Mammary epithelial cell (primary cell): ENCODE measurements at regions of chr3 and their contacts with region 1.

Region 1: GRCh38 chr3:170869645-170870593 is at the start of gene RPL22L1:
- DNase-seq: peak; percentile 94
- H3K4me3 ChIP-seq: peak within 1 kb of the TSS; percentile 75 to 82 (median 80)
- H3K27ac ChIP-seq: peak within 1 kb of the TSS; percentile 92
- H3K4me1 ChIP-seq: peaks cover 10% of the 10 kb centered on the region
- H3K27me3 ChIP-seq: no peaks in the 10 kb centered on the region
- CTCF ChIP-seq: peak in 1 of 2 donors; percentile 1
- total RNA-seq, gene RPL22L1: 30.7 to 227 TPM

Region 2: DNA sequence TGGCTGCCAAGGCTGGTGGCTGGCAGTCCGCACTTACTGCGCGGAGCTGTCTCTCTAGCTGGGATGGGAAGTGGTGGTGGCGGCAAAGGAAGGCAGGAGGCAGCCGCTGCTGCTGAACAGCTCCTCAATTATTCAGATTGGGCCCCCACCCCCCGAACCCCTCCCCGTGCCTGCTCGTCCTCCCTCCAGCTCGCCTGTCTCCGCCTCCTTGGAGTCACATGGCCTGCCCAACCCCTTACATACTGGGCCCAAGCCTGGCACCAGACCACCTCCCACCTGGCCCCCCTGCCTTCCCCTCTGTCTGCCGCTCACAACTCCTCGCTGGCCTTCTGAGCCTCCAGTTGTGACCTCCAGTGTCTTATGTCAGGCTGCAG is 284.0 kb before region 1 on chr3 and contains the start of gene SLC7A14:
- CTCF ChIA-PET with region 1: no interaction called
- dilution Hi-C with region 1: no loop called
- in situ Hi-C with region 1: no loop called
- intact Hi-C with region 1: no loop called
- DNase-seq: no peak
- H3K4me3 ChIP-seq: peak within 1 kb of the TSS in 2 of 3 experiments; percentile 17 to 19
- H3K27ac ChIP-seq: no peak within 1 kb of the TSS
- H3K4me1 ChIP-seq: peaks cover 8% of the 10 kb centered on the region
- H3K27me3 ChIP-seq: peaks cover 17% of the 10 kb centered on the region
- CTCF ChIP-seq: no peak
- total RNA-seq, gene SLC7A14: under 0.01 TPM in 1 of 2 donors, not detected in the other

Region 3: GRCh38 chr3:170889132-170889531 is 19.2 kb after region 1 on chr3:
- CTCF ChIA-PET with region 1: no interaction called
- dilution Hi-C with region 1: no loop called
- in situ Hi-C with region 1: no loop called
- intact Hi-C with region 1: no loop called
- DNase-seq: no peak
- H3K4me3 ChIP-seq: no peak overlapping the region
- H3K27ac ChIP-seq: no peak overlapping the region
- H3K4me1 ChIP-seq: no peaks in the 10 kb centered on the region
- H3K27me3 ChIP-seq: no peaks in the 10 kb centered on the region
- CTCF ChIP-seq: no peak

Region 4: DNA sequence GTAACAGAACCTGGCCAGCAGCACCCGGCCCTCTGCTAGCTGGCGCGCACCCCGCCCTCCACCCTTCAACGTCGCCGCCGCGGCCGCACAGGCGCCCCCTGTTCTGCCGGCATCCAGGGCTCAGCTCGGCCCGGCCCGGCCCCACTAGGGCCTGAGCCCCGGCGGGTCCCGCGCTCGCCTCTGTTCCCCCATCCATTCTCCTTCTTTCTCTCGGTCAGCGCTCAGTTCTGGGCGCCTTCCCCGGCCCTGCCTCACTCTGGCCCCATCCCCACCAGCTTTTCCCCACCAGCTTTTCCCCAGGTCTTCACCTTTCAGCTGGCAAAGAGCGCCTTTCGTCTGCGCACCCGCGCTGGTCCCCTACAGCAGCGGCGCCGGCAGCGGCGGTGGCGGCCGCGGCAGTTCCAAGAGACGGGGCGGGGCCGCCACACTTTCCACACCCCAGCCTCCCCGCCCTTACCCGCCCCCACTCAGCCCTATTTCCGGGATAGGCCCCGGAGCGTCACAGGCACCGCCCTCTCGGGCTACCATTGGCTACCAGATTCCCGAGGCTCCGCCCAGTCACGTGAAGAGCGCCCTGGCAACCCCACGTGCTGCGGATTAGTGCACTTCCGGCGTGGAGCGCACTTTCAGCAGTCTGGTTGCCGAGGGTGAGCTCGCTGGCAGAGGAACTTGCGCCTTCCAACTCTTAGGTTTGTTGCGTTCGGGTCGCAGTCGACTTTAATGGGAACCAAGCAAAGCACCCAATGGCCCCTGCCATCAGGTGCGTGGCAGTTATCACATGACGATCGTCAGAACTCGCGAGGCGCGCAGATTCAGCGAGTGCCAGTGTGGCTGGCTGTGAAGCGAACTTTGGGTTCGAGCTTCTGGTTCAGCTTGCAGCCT is 38.6 kb after region 1 on chr3 and contains the start of gene EIF5A2:
- CTCF ChIA-PET with region 1: no interaction called
- dilution Hi-C with region 1: no loop called
- in situ Hi-C with region 1: no loop called
- intact Hi-C with region 1: loop called (anchors 2 kb)
- DNase-seq: peak; percentile 89
- H3K4me3 ChIP-seq: peak within 1 kb of the TSS; percentile 77 to 85 (median 83)
- H3K27ac ChIP-seq: peak within 1 kb of the TSS; percentile 58
- H3K4me1 ChIP-seq: peaks cover 18% of the 10 kb centered on the region
- H3K27me3 ChIP-seq: no peaks in the 10 kb centered on the region
- CTCF ChIP-seq: no peak
- total RNA-seq, gene EIF5A2: 10.7 to 22.8 TPM

Region 5: DNA sequence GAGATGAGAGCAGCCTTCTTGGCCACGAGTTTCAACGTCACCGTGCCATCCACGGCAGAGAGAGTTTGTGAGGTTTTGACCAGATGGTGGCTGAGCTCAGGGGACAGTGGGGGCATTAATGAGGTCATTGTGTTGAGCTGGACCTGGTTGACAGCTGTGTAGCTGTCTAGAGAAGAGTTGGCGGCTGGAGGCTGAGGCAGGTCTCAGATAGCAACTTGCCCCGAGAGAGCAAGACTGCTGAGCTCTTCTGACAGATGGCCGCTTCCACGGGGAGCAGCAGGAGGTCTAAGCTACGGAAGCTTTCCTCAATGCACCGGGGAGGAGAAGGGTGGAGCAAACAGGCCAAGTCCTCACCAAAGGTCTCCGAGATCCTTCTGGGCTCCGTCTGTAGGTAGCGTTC is 83.3 kb after region 1 on chr3:
- CTCF ChIA-PET with region 1: no interaction called
- dilution Hi-C with region 1: no loop called
- in situ Hi-C with region 1: no loop called
- intact Hi-C with region 1: no loop called
- DNase-seq: no peak
- H3K4me3 ChIP-seq: no peak overlapping the region
- H3K27ac ChIP-seq: no peak overlapping the region
- H3K4me1 ChIP-seq: no peaks in the 10 kb centered on the region
- H3K27me3 ChIP-seq: peaks cover 4% of the 10 kb centered on the region
- CTCF ChIP-seq: no peak